B cell (primary cell): ENCODE measurements at regions of chr4 and their contacts with region 1.

Region 1: GRCh38 chr4:26860157-26860921 is at the start of gene STIM2:
- DNase-seq: peak; percentile 99
- ATAC-seq: peak; percentile 64
- H3K4me3 ChIP-seq: peak within 1 kb of the TSS; percentile 75 to 95 (median 80)
- H3K4me3 Mint-ChIP-seq: peak within 1 kb of the TSS; percentile 100
- H3K27ac ChIP-seq: peak within 1 kb of the TSS; percentile 77 to 86
- H3K27ac Mint-ChIP-seq: peak within 1 kb of the TSS; percentile 99
- H3K4me1 ChIP-seq: peaks cover 37 to 56% of the 10 kb centered on the region in 2 donors
- H3K4me1 Mint-ChIP-seq: peaks cover 61% of the 10 kb centered on the region
- H3K27me3 ChIP-seq: no peaks in the 10 kb centered on the region
- H3K27me3 Mint-ChIP-seq: no peaks in the 10 kb centered on the region
- CTCF ChIP-seq: peak; percentile 52
- total RNA-seq, gene STIM2: 96.0 and 103 TPM in 2 replicates

Region 2: DNA sequence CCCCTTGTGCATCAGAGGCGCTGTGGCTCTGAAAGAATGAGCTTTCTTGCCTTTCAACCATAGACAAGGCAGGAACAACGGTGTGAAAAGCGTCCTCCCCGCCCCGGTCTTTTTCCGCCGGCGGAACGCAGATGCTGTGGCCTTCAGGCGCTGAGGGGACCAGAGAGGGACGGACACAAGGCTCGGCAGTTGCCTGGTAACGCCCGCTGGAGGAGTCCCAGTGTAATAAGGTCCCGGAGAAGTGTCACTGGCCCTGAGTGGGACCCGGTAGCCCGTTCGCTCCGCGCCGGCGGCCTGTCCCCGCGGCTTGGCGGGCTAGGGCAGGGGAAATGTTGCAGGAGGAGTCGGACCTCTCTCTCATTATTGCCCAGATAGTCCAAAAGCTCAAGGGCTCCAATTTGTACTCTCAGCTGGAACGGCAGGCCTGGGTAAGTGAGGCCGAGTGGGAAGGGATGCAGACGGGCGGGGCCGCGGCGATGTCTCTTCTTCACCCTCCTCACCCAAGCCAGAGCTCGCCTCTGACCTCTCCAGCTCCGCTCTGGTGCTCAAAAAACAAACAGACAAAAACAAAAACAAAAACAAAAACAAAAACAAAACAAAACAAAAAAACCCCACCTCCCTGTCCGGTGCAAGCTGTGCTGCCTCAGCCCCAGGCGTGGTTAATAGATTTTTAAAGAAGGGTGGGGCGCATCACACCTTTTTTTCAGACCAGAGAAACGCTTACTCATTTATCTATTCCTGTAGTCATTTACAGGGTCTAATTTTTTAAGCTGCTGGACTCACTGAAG is 276.3 kb before region 1 on chr4 and contains the start of gene TBC1D19:
- CTCF ChIA-PET with region 1: interaction called, 3 read pairs
- POLR2A ChIA-PET with region 1: interaction called, 5 read pairs
- intact Hi-C with region 1: loop called (anchors 1 kb)
- DNase-seq: peak; percentile 90
- ATAC-seq: peak; percentile 95
- H3K4me3 ChIP-seq: peak within 1 kb of the TSS; percentile 43 to 92 (median 82)
- H3K4me3 Mint-ChIP-seq: peak within 1 kb of the TSS; percentile 88
- H3K27ac ChIP-seq: peak within 1 kb of the TSS; percentile 85 to 87
- H3K27ac Mint-ChIP-seq: peak within 1 kb of the TSS; percentile 91
- H3K4me1 ChIP-seq: peaks cover 11 to 13% of the 10 kb centered on the region in 2 donors
- H3K4me1 Mint-ChIP-seq: peaks cover 26% of the 10 kb centered on the region
- H3K27me3 ChIP-seq: no peaks in the 10 kb centered on the region
- H3K27me3 Mint-ChIP-seq: peaks cover 7% of the 10 kb centered on the region
- CTCF ChIP-seq: no peak
- total RNA-seq, gene TBC1D19: 10.0 and 11.0 TPM in 2 replicates

Region 3: DNA sequence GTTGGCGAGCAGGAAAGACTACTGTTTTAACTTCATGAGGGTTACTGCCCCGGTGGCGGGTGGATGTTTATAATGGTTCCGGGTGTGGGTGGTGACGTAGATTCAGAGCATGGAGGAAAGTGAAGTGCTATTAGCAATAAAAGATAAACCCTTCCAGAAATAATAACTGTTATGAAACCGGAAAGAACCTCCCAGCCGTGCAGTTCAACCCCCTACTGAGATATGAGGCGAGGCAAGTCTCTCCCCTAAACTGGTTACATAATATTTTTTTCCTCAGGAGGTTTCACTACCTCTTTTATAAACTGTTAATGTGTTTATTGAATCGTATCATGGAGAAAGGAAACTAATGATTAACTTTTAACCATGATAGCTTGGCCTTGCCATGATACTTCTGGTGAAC is 33.6 kb before region 1 on chr4:
- CTCF ChIA-PET with region 1: interaction called, 5 read pairs
- POLR2A ChIA-PET with region 1: interaction called, 3 read pairs
- intact Hi-C with region 1: loop called (anchors 1 kb)
- DNase-seq: peak; percentile 84
- ATAC-seq: peak; percentile 83
- H3K4me3 ChIP-seq: peak overlapping the region in 4 of 5 experiments; percentile 7 to 59 (median 24)
- H3K4me3 Mint-ChIP-seq: peak overlapping the region; percentile 77
- H3K27ac ChIP-seq: peak overlapping the region; percentile 29 to 45
- H3K27ac Mint-ChIP-seq: peak overlapping the region; percentile 62
- H3K4me1 ChIP-seq: peaks cover 75 to 78% of the 10 kb centered on the region in 2 donors
- H3K4me1 Mint-ChIP-seq: peaks cover 79% of the 10 kb centered on the region
- H3K27me3 ChIP-seq: peaks cover 0 to 27% (median 9%) of the 10 kb centered on the region in 4 experiments
- H3K27me3 Mint-ChIP-seq: peaks cover 12% of the 10 kb centered on the region
- CTCF ChIP-seq: no peak

Region 4: DNA sequence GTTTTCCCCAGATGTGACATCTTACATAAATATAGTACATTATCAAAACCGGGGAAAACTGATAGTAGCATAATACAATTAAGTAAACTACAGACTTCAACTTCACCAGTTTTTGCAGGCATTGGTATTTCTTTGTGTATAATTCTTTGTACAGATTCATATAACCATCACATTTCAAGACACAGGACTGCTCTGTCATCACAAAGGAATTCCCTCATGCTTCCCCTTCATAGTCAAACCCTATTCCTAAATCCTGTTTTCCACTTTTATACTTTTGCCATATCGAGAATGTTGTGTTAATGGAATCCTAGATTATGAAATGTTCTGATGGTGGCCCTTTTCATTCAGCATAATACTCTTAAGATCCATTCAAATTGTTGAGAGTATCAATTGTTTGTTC is 36.3 kb after region 1 on chr4:
- CTCF ChIA-PET with region 1: no interaction called
- POLR2A ChIA-PET with region 1: interaction called, 3 read pairs
- intact Hi-C with region 1: loop called (anchors 5 kb)
- DNase-seq: no peak
- ATAC-seq: no peak
- H3K4me3 ChIP-seq: no peak overlapping the region
- H3K4me3 Mint-ChIP-seq: no peak overlapping the region
- H3K27ac ChIP-seq: no peak overlapping the region
- H3K27ac Mint-ChIP-seq: no peak overlapping the region
- H3K4me1 ChIP-seq: peaks cover 21 to 37% of the 10 kb centered on the region in 2 donors
- H3K4me1 Mint-ChIP-seq: peaks cover 68% of the 10 kb centered on the region
- H3K27me3 ChIP-seq: no peaks in the 10 kb centered on the region
- H3K27me3 Mint-ChIP-seq: no peaks in the 10 kb centered on the region
- CTCF ChIP-seq: no peak

Region 5: DNA sequence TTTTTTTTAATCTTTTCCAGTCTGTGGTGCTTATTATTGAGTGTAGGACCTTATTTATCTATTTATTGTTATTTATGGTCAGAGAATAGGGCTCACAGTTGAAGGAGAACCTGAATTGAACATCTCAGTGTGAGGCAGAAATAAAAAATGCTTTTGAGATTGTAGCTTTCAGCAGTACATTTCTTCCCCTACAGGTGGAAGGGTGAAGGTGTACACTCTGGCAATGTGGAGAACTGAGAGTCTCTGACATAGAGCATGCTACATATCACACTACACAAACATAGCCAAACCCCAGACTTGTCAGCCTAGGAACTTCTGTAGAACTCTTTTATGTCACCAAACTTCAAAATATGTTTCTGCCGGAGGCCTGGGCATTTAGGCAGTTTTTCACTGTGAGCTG is 140.5 kb after region 1 on chr4:
- CTCF ChIA-PET with region 1: interaction called, 13 read pairs
- POLR2A ChIA-PET with region 1: no interaction called
- intact Hi-C with region 1: no loop called
- DNase-seq: peak; percentile 61
- ATAC-seq: peak; percentile 87
- H3K4me3 ChIP-seq: no peak overlapping the region
- H3K4me3 Mint-ChIP-seq: no peak overlapping the region
- H3K27ac ChIP-seq: no peak overlapping the region
- H3K27ac Mint-ChIP-seq: no peak overlapping the region
- H3K4me1 ChIP-seq: peaks cover 10 to 12% of the 10 kb centered on the region in 2 donors
- H3K4me1 Mint-ChIP-seq: peaks cover 30% of the 10 kb centered on the region
- H3K27me3 ChIP-seq: no peaks in the 10 kb centered on the region
- H3K27me3 Mint-ChIP-seq: no peaks in the 10 kb centered on the region
- CTCF ChIP-seq: peak; percentile 65